Dendritic cell treated with granulocyte-macrophage colony-stimulating factor and Interleukin-4, amounts not matched to agents 40 ng/mL and 50 ng/mL, for 4 days (primary cell): ENCODE measurements at regions of chr7 and their contacts with region 1.

Region 1: GRCh38 chr7:73451780-73452398 is 18.3 kb downstream of the FZD9 start:
- H3K4me3 Mint-ChIP-seq: no peak overlapping the region
- H3K27ac Mint-ChIP-seq: no peak overlapping the region
- H3K4me1 Mint-ChIP-seq: peaks cover 5% of the 10 kb centered on the region
- H3K27me3 Mint-ChIP-seq: no peaks in the 10 kb centered on the region

Region 2: GRCh38 chr7:73509463-73509862 is 57.6 kb after region 1 on chr7:
- intact Hi-C with region 1: loop called (anchors 10 kb)
- H3K4me3 Mint-ChIP-seq: no peak overlapping the region
- H3K27ac Mint-ChIP-seq: no peak overlapping the region
- H3K4me1 Mint-ChIP-seq: no peaks in the 10 kb centered on the region
- H3K27me3 Mint-ChIP-seq: no peaks in the 10 kb centered on the region